CD14-positive monocyte (primary cell): ENCODE measurements at regions of chr9 and their contacts with region 1.

Region 1: DNA sequence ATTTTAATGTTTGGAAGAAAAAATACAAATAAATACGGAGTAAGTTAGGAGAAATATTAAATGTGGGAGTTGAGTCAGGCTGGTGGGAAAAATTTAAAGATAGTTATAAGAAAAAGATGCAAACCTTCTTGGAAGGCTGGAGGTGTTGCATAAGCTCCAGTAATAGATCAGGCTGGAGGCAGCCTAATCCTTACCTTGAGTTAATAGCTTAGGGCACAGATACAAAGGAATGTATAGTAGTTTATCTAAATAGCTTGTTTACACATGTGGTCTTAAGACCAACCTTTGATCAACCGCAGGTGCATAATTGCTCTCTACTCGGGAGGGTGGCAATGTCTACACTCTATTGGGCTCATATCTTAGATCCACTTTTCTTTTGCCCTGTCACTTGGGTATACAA is 2.7 kb upstream of the INSL4 start:
- DNase-seq: no peak
- H3K4me3 ChIP-seq: no peak overlapping the region
- H3K4me3 Mint-ChIP-seq: no peak overlapping the region
- H3K27ac ChIP-seq: no peak overlapping the region
- H3K27ac Mint-ChIP-seq: no peak overlapping the region
- H3K4me1 ChIP-seq: no peaks in the 10 kb centered on the region
- H3K4me1 Mint-ChIP-seq: no peaks in the 10 kb centered on the region
- H3K27me3 ChIP-seq: no peaks in the 10 kb centered on the region
- H3K27me3 Mint-ChIP-seq: peaks cover 1 to 3% (median 2%) of the 10 kb centered on the region in 3 donors
- CTCF ChIP-seq: no peak

Region 2: GRCh38 chr9:5178126-5178805 is 50.3 kb before region 1 on chr9:
- intact Hi-C with region 1: loop called in 1 of 2 experiments (anchors 10 kb)
- DNase-seq: no peak
- H3K4me3 ChIP-seq: no peak overlapping the region
- H3K4me3 Mint-ChIP-seq: no peak overlapping the region
- H3K27ac ChIP-seq: no peak overlapping the region
- H3K27ac Mint-ChIP-seq: no peak overlapping the region
- H3K4me1 ChIP-seq: no peaks in the 10 kb centered on the region
- H3K4me1 Mint-ChIP-seq: no peaks in the 10 kb centered on the region
- H3K27me3 ChIP-seq: no peaks in the 10 kb centered on the region
- H3K27me3 Mint-ChIP-seq: peaks cover 0 to 1% (median 0%) of the 10 kb centered on the region in 3 donors
- CTCF ChIP-seq: no peak